CD8-positive, alpha-beta T cell (primary cell): ENCODE measurements at regions of chr1 and their contacts with region 1.

Region 1: GRCh38 chr1:1374929-1375662 is at the start of gene AURKAIP1:
- DNase-seq: peak; percentile 89 to 100 (median 95)
- ATAC-seq: peak; percentile 58
- H3K4me3 ChIP-seq: peak within 1 kb of the TSS; percentile 79 to 91
- H3K4me3 Mint-ChIP-seq: peak within 1 kb of the TSS; percentile 86
- H3K27ac ChIP-seq: peak within 1 kb of the TSS; percentile 83 to 94
- H3K27ac Mint-ChIP-seq: peak within 1 kb of the TSS; percentile 94
- H3K4me1 ChIP-seq: peaks cover 33% of the 10 kb centered on the region
- H3K4me1 Mint-ChIP-seq: peaks cover 33% of the 10 kb centered on the region
- H3K27me3 ChIP-seq: no peaks in the 10 kb centered on the region
- H3K27me3 Mint-ChIP-seq: no peaks in the 10 kb centered on the region
- CTCF ChIP-seq: no peak
- total RNA-seq, gene AURKAIP1: 58.4 to 62.6 TPM

Region 2: GRCh38 chr1:1033009-1033587 is 342.0 kb before region 1 on chr1:
- CTCF ChIA-PET with region 1: interaction called, 3 read pairs
- POLR2A ChIA-PET with region 1: no interaction called
- intact Hi-C with region 1: loop called (anchors 1 to 5 kb)
- DNase-seq: peak; percentile 72 to 93 (median 85)
- ATAC-seq: peak; percentile 94
- H3K4me3 ChIP-seq: peak overlapping the region; percentile 23 to 24
- H3K4me3 Mint-ChIP-seq: peak overlapping the region; percentile 74
- H3K27ac ChIP-seq: no peak overlapping the region
- H3K27ac Mint-ChIP-seq: no peak overlapping the region
- H3K4me1 ChIP-seq: peaks cover 13% of the 10 kb centered on the region
- H3K4me1 Mint-ChIP-seq: peaks cover 7% of the 10 kb centered on the region
- H3K27me3 ChIP-seq: peaks cover 0 to 27% of the 10 kb centered on the region in 2 experiments
- H3K27me3 Mint-ChIP-seq: peaks cover 20% of the 10 kb centered on the region
- CTCF ChIP-seq: peak; percentile 95

Region 3: DNA sequence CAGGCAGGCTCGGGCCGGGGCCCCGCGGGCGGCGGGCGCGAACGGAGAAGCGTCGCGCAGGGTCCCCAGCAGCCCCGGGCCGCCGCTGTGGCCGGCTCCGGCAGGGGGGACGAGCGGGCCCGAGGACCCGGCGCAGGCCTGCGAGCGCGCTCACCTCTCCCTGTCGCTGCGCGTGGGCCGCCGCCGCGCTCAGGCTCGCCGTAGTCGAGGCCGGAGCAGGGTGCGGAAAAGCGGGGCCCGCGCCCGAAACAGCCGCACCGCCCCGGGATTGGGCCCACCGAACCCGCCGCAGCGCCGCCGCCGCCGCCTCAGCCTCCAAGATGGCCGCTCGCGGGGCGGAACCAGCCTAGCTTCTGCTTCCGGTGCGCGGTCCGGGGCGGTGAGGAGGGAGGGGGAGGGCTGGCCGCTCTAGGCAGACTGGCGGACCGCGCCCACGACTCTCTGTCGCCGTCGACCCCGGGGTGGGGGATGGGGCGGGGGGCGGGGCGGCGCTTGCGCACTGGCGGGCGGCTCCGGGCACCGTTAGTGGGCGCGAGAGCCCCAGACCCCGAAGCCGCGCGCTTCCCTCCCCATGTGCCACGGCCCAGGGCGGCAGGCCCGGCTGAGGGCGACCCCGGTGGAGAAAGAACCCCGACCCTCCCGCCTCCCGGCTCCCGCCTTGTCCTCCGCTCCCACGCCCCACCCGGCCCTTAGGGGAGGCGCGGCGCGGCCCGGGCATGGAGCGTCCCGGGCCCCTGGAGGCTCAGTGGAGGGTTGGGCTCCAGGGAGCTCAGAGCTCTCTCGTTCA is 101.4 kb before region 1 on chr1 and contains the start of gene UBE2J2:
- CTCF ChIA-PET with region 1: no interaction called
- POLR2A ChIA-PET with region 1: interaction called, 3 read pairs
- intact Hi-C with region 1: loop called in 1 of 2 experiments (anchors 1 kb)
- DNase-seq: peak; percentile 86 to 96 (median 93)
- ATAC-seq: peak; percentile 95
- H3K4me3 ChIP-seq: peak within 1 kb of the TSS; percentile 69 to 91
- H3K4me3 Mint-ChIP-seq: peak within 1 kb of the TSS; percentile 88
- H3K27ac ChIP-seq: peak within 1 kb of the TSS; percentile 53 to 63
- H3K27ac Mint-ChIP-seq: peak within 1 kb of the TSS; percentile 89
- H3K4me1 ChIP-seq: peaks cover 39% of the 10 kb centered on the region
- H3K4me1 Mint-ChIP-seq: peaks cover 40% of the 10 kb centered on the region
- H3K27me3 ChIP-seq: no peaks in the 10 kb centered on the region
- H3K27me3 Mint-ChIP-seq: no peaks in the 10 kb centered on the region
- CTCF ChIP-seq: no peak
- total RNA-seq, gene UBE2J2: 46.4 to 50.7 TPM

Region 4: DNA sequence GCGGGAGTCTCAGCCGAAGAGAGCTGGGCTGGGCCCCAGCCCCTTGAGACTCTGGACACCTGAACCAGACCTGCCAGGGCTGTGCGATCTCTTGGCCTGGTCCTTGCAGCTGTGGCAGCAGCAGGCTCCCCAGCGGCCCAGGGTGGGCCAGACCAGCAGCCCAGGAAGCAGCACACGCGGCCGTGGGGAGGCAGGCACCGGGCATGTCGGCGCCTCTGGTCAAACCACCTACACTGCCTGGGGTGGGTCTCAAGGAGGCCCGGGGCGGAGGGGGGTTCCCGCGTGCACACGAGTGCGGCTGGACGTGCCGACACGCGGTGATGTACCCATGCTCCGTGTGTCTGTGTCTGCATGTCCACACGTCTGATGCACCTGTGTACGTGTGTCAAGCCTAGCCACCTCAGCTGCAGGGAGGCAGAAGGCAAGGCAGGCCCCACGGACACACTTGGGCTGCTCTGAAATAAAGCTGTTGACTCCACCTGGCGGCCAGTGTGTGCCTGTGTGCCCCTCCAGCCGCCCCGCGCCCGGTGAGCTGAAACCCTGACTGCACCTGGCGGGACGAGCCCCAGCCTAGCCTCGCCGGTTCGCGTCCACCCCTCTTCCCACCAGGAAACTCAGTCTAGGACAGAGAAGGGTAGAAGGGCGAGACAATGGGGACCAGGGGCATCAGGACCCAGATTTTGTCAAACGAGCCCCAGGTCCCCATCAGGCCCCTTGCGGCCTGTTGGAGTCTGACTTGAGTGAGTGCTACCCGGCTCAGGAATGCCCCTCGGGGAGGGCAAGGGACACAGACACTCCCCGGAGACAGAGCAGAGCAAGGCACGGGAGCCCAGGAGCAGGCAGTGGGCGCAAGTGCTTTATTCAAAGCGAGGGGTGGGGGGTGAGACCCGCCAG is 83.3 kb before region 1 on chr1:
- CTCF ChIA-PET with region 1: no interaction called
- POLR2A ChIA-PET with region 1: no interaction called
- intact Hi-C with region 1: no loop called
- DNase-seq: peak in 8 of 9 experiments; percentile 55 to 82 (median 74)
- ATAC-seq: peak; percentile 87
- H3K4me3 ChIP-seq: no peak overlapping the region
- H3K4me3 Mint-ChIP-seq: no peak overlapping the region
- H3K27ac ChIP-seq: no peak overlapping the region
- H3K27ac Mint-ChIP-seq: no peak overlapping the region
- H3K4me1 ChIP-seq: peaks cover 4% of the 10 kb centered on the region
- H3K4me1 Mint-ChIP-seq: peaks cover 3% of the 10 kb centered on the region
- H3K27me3 ChIP-seq: no peaks in the 10 kb centered on the region
- H3K27me3 Mint-ChIP-seq: no peaks in the 10 kb centered on the region
- CTCF ChIP-seq: peak; percentile 58

Region 5: DNA sequence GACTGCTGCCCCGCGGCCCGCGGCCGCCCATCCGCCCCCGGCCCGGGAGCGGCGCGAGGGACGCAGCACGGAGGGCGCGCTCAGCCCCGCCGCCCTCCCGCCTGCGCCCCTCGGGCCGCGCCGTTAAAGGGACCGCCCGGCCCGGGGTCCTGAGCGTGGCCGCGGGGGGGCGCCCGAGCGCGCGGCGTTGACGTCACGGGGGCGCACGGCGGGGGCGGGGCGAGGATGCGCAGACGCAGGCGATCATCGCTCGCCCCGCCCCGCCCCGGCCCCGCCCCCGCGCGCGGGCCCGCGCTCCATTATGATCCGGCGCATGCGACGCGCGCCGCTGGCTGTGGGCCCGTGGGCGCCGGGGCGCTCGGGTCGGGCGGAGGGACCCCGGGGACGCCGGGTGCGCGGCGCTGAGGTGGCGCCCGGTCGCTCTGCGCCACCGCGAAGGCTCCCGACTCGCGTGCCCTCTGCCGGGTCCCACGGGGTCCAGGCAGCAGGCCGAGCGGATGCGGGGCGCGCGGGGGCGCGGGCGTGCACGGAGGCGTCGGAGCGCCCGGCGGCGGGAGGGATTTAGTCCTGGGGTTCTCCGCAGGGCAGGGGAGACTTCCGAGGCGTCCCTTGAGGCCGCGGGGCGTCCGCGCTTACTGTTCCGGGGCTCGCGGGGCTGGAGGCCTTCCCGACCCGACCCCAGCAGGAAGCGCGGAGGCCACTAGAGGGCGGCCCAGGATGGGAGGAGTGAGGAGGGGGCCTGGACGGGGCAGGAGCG is 25.7 kb before region 1 on chr1 and contains the start of gene DVL1:
- CTCF ChIA-PET with region 1: interaction called, 41 read pairs
- POLR2A ChIA-PET with region 1: interaction called, 13 read pairs
- intact Hi-C with region 1: loop called (anchors 1 kb)
- DNase-seq: peak; percentile 50 to 86 (median 72)
- ATAC-seq: peak; percentile 84
- H3K4me3 ChIP-seq: peak within 1 kb of the TSS; percentile 57 to 63
- H3K4me3 Mint-ChIP-seq: peak within 1 kb of the TSS; percentile 76
- H3K27ac ChIP-seq: peak within 1 kb of the TSS; percentile 46 to 72
- H3K27ac Mint-ChIP-seq: peak within 1 kb of the TSS; percentile 41
- H3K4me1 ChIP-seq: peaks cover 27% of the 10 kb centered on the region
- H3K4me1 Mint-ChIP-seq: peaks cover 29% of the 10 kb centered on the region
- H3K27me3 ChIP-seq: peaks cover 0 to 16% of the 10 kb centered on the region in 2 experiments
- H3K27me3 Mint-ChIP-seq: peaks cover 8% of the 10 kb centered on the region
- CTCF ChIP-seq: peak; percentile 43
- total RNA-seq, gene DVL1: 44.5 to 45.5 TPM

Region 6: DNA sequence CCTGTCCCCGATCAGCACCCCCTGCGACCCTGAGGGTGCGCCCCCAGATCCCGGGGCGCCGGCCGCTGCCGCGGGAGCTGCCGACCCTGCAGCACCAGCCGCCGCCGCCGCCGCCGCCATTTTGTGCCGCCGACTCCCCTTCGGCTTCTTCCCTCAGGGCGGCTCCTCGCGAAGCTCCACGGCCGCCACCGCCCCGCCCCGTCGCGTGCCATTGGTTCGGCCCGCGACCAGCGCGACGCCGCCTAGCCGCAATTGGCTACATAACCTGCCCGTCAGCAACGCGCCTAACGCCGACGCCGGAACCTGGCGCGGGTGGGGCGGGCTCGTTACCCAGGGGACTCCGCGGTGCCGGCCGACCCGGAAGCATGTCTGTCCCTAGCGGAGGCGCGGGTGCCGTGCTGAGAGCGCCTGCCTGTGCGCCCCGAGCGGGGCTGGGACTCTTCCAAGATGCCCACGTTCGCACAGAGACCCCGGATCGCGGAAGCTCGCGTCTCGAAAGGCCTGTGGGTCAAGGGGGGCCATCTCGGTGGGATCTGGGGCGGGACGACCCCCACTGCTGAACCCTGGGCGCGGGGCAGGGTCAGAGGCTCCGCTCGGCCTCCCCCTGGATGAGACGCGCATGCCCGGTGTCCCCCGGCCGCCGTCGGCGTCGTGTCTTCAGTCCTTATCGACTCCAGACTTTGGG is 24.2 kb after region 1 on chr1 and contains the start of gene CCNL2:
- CTCF ChIA-PET with region 1: interaction called, 12 read pairs
- POLR2A ChIA-PET with region 1: interaction called, 46 read pairs
- intact Hi-C with region 1: loop called (anchors 1 kb)
- DNase-seq: peak; percentile 99 to 100 (median 99)
- ATAC-seq: peak; percentile 95
- H3K4me3 ChIP-seq: peak within 1 kb of the TSS; percentile 92 to 96
- H3K4me3 Mint-ChIP-seq: peak within 1 kb of the TSS; percentile 89
- H3K27ac ChIP-seq: peak within 1 kb of the TSS; percentile 81 to 92
- H3K27ac Mint-ChIP-seq: peak within 1 kb of the TSS; percentile 89
- H3K4me1 ChIP-seq: peaks cover 30% of the 10 kb centered on the region
- H3K4me1 Mint-ChIP-seq: peaks cover 45% of the 10 kb centered on the region
- H3K27me3 ChIP-seq: no peaks in the 10 kb centered on the region
- H3K27me3 Mint-ChIP-seq: no peaks in the 10 kb centered on the region
- CTCF ChIP-seq: peak; percentile 55
- total RNA-seq, gene CCNL2: 307 to 328 TPM

Region 7: GRCh38 chr1:1471389-1472052 is 96.4 kb after region 1 on chr1 and contains the start of gene ATAD3B:
- CTCF ChIA-PET with region 1: no interaction called
- POLR2A ChIA-PET with region 1: no interaction called
- intact Hi-C with region 1: loop called in 1 of 2 experiments (anchors 1 kb)
- DNase-seq: peak; percentile 75 to 95 (median 90)
- ATAC-seq: peak; percentile 93
- H3K4me3 ChIP-seq: peak within 1 kb of the TSS; percentile 62 to 86
- H3K4me3 Mint-ChIP-seq: peak within 1 kb of the TSS; percentile 92
- H3K27ac ChIP-seq: peak within 1 kb of the TSS; percentile 81 to 89
- H3K27ac Mint-ChIP-seq: peak within 1 kb of the TSS; percentile 94
- H3K4me1 ChIP-seq: peaks cover 24% of the 10 kb centered on the region
- H3K4me1 Mint-ChIP-seq: peaks cover 24% of the 10 kb centered on the region
- H3K27me3 ChIP-seq: no peaks in the 10 kb centered on the region
- H3K27me3 Mint-ChIP-seq: no peaks in the 10 kb centered on the region
- CTCF ChIP-seq: no peak
- total RNA-seq, gene ATAD3B: 55.4 to 69.6 TPM

Region 8: DNA sequence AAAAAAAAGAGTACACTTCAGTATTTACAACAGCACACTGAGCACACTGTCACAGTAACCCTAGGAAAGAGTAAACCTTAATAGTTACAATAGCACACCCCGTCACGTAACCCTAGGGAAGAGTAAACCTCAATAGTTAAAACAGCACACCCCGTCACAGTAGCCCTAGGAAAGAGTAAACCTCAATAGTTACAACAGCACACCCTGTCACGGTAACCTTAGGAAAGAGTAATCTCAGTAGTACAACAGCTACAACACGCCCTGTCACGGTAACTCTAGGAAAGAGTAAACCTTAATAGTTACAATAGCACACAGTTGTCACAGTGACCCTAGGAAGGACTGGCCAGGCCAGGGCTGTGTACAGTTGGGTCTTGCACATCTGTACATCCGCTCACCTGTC is 346.1 kb after region 1 on chr1:
- CTCF ChIA-PET with region 1: no interaction called
- POLR2A ChIA-PET with region 1: no interaction called
- intact Hi-C with region 1: loop called in 1 of 2 experiments (anchors 10 kb)
- DNase-seq: no peak
- ATAC-seq: no peak
- H3K4me3 ChIP-seq: no peak overlapping the region
- H3K4me3 Mint-ChIP-seq: peak overlapping the region; percentile 11
- H3K27ac ChIP-seq: no peak overlapping the region
- H3K27ac Mint-ChIP-seq: no peak overlapping the region
- H3K4me1 ChIP-seq: no peaks in the 10 kb centered on the region
- H3K4me1 Mint-ChIP-seq: peaks cover 10% of the 10 kb centered on the region
- H3K27me3 ChIP-seq: no peaks in the 10 kb centered on the region
- H3K27me3 Mint-ChIP-seq: no peaks in the 10 kb centered on the region
- CTCF ChIP-seq: no peak